ENCODE measurements at regions of chr1 and their contacts with region 1.

Region 1: DNA sequence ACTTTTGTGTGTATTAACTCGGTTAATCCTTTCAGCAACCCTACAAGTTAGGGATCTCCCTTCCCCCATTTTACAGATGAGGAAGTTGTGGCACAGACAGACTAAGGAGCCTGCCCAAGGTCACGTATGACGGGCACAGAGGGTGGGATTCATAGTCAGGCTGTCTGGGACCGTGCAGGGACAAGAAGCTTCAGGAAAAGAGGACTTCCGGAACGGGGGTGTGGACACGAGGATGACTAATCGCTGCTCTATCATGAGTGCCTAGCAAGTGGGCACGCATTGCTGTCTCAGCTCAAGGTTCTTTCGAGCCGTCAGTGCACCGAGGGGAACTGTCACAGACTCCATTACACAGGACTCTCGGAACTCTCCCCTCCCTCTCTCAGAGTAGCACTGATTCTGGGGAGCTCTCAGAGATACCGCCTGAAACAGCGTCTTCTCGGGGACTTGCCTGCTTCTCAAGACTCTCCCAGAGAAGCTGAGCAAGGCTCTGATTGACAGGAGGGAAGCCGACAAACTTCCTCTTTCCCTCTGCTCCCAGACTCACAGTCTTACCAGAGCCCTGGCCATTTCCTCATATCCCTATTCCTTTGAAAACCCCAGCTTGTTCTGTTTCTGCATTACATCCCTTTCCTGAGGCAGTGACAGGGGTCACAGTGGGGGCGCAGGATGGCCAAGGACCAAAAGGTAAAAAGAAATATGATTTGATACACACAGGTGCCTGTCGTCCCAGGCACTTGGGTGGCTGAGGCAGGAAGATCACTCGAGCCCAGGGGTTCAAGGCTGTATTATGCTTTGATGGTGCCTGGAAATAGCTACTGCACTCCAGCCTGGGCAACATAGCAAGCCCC is 14.4 kb downstream of the FHAD1 start:
- DNase-seq: peak; percentile 74
- H3K4me3 ChIP-seq: peak overlapping the region in 2 of 3 experiments; percentile 6 to 25
- H3K27ac ChIP-seq: peak overlapping the region; percentile 78
- H3K4me1 ChIP-seq: peaks cover 23% of the 10 kb centered on the region
- H3K27me3 ChIP-seq: peaks cover 0 to 5% of the 10 kb centered on the region in 2 experiments
- CTCF ChIP-seq: no peak
- POLR2A ChIP-seq: no peak

Region 2: GRCh38 chr1:15201849-15202551 is 59.4 kb before region 1 on chr1:
- CTCF ChIA-PET with region 1: no interaction called
- POLR2A ChIA-PET with region 1: no interaction called
- dilution Hi-C with region 1: no loop called
- intact Hi-C with region 1: loop called (anchors 2 kb)
- DNase-seq: no peak
- H3K4me3 ChIP-seq: no peak overlapping the region
- H3K27ac ChIP-seq: no peak overlapping the region
- H3K4me1 ChIP-seq: peaks cover 14% of the 10 kb centered on the region
- H3K27me3 ChIP-seq: no peaks in the 10 kb centered on the region
- CTCF ChIP-seq: no peak
- POLR2A ChIP-seq: no peak

Region 3: DNA sequence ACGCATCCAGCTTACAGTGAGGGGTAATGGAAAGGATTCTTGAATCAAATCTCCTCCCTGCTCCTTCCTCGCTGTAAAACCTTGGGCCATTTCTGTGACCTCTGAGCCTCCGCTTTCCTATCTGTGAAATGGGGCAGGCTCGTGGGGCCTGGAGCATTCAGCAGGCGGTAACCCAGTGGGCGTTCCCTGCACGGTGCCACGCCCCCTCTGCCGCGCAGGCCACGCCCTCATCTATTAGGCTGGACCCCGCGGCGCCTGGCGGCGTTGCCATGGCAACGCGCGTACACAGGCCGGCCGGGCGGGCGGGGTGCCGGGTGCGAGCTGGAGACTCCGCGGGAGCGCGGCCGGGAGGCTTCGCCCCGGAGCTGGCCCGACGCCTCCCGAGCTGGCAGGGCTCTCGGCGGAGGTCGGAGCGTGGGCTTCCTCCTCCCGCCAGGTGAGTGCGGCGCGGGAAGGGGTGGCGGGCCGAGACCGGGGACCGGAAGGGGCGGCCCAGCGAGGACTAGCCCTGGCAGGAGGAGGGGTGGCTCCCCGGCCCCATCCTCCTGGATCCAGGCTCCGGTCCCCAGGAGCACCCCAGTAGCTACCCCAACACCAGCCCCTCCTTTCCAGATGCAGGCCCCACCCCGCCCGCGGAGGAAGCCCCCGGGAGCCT is 14.3 kb before region 1 on chr1 and contains the start of gene FHAD1:
- CTCF ChIA-PET with region 1: interaction called, 20 read pairs
- POLR2A ChIA-PET with region 1: no interaction called
- dilution Hi-C with region 1: no loop called
- intact Hi-C with region 1: loop called (anchors 2 kb)
- DNase-seq: peak; percentile 64
- H3K4me3 ChIP-seq: peak within 1 kb of the TSS in 2 of 3 experiments; percentile 18 to 46
- H3K27ac ChIP-seq: no peak within 1 kb of the TSS
- H3K4me1 ChIP-seq: peaks cover 3% of the 10 kb centered on the region
- H3K27me3 ChIP-seq: peaks cover 23 to 24% of the 10 kb centered on the region in 2 experiments
- CTCF ChIP-seq: no peak
- POLR2A ChIP-seq: no peak
- total RNA-seq, gene FHAD1: 0.51 and 0.69 TPM in 2 replicates

Region 4: GRCh38 chr1:15656464-15656863 is 395.1 kb after region 1 on chr1:
- CTCF ChIA-PET with region 1: no interaction called
- POLR2A ChIA-PET with region 1: no interaction called
- dilution Hi-C with region 1: no loop called
- intact Hi-C with region 1: no loop called
- DNase-seq: no peak
- H3K4me3 ChIP-seq: no peak overlapping the region
- H3K27ac ChIP-seq: no peak overlapping the region
- H3K4me1 ChIP-seq: peaks cover 10% of the 10 kb centered on the region
- H3K27me3 ChIP-seq: no peaks in the 10 kb centered on the region
- CTCF ChIP-seq: no peak
- POLR2A ChIP-seq: no peak

Region 5: DNA sequence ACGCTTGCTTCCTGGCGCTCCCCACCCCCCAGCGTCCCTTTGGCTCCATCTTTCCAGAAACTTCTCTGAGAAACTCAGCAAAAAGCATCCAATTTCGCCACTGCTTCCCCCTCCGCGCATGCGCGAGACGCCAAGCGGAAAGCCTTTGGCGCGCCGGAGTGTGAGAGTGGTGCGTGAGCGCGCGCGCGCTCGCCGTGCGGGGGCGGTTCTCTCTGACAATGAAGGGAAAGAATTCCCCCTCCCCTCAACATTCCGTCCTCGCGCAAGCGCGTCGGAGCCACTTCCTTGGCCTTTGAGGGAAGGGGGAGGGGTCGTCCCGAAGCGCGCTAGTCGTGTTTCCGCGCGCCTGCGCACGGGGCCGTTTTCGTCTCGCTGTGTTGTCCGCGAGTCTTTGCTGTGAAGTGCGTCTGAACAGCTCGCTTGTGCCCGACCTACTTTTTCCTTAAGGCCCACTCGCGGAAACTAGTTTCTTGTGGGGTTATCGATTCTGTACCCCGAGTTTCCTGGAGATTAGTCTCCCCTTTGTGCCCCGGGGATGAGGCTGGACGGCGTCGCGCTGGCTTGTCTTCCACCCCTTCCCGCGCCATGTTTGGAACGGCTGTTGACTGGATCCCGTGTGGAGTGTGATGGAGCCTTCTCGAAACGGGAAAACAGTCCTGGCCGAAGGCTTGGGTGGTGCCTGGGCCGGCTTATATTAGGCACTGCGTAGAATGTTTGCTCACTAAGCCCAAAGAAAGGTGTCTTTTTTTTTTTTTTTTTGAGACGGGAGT is 574.5 kb after region 1 on chr1:
- CTCF ChIA-PET with region 1: no interaction called
- POLR2A ChIA-PET with region 1: no interaction called
- dilution Hi-C with region 1: no loop called
- intact Hi-C with region 1: no loop called
- DNase-seq: peak; percentile 100
- H3K4me3 ChIP-seq: peak overlapping the region in 2 of 3 experiments; percentile 58 to 66
- H3K27ac ChIP-seq: peak overlapping the region; percentile 95
- H3K4me1 ChIP-seq: peaks cover 3% of the 10 kb centered on the region
- H3K27me3 ChIP-seq: no peaks in the 10 kb centered on the region
- CTCF ChIP-seq: no peak
- POLR2A ChIP-seq: peak; percentile 85

Measured in endothelial cell of umbilical vein (primary cell).